ENCODE measurements at regions of chr7 and their contacts with region 1.

Region 1: DNA sequence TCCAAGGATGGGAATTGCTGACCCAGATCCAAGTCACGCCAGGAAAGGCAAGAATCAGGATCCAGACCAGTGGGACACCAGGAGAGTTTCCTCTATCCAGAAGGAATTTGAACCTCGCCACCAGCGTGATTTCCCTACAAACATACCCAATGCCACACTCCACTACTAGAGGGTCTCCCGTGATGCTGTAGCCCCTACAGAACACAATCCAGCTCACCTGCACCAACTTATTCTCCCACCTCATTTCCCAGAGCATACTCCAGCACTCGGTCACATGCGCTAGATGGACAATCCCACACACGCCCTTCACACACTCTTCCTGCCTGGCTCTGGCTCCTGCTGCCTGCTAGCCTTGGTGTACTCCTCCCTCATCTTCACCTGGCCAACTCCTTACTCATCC is 142.1 kb upstream of the PDE1C start:
- DNase-seq: no peak
- ATAC-seq: no peak
- H3K4me3 ChIP-seq: no peak overlapping the region
- H3K27ac ChIP-seq: no peak overlapping the region
- H3K4me1 ChIP-seq: no peaks in the 10 kb centered on the region
- H3K27me3 ChIP-seq: no peaks in the 10 kb centered on the region; a peak in 1 of 4 replicates
- CTCF ChIP-seq: no peak
- EP300 ChIP-seq: no peak
- POLR2A ChIP-seq: no peak
- RAD21 ChIP-seq: no peak

Region 2: DNA sequence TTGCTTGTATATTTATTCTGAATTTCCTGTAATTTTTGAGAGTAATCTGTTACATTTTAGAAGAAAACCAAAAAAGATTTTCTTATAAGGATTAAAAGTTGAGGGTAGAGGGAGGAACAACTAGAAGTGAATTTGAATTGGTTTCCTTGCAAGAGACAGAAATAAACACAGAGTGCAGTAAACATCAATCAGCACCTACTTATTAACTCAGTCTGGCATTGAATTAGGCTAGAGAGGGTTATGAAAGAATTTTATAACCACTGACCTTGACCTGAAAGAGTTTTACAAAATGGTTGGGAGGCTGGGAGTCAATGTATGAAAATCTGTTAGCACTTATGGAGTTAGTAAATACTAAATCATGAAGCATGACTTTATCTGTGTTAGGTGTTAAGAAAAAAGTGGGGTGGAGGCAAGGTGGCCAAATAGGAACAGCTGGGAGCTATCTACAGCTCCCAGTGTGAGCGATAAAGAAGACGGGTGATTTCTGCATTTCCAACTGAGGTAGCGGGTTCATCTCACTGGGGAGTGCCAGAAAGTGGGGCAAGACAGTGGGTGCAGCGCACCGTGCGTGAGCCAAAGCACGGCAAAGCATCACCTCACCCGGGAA is 248.6 kb before region 1 on chr7:
- CTCF ChIA-PET with region 1: no interaction called
- POLR2A ChIA-PET with region 1: no interaction called
- RAD21 ChIA-PET with region 1: no interaction called
- SMC1A ChIA-PET with region 1: no interaction called
- in situ Hi-C with region 1: no loop called
- intact Hi-C with region 1: no loop called
- DNase-seq: no peak
- ATAC-seq: no peak
- H3K4me3 ChIP-seq: no peak overlapping the region
- H3K27ac ChIP-seq: no peak overlapping the region
- H3K4me1 ChIP-seq: no peaks in the 10 kb centered on the region
- H3K27me3 ChIP-seq: no peaks in the 10 kb centered on the region
- CTCF ChIP-seq: no peak
- EP300 ChIP-seq: no peak
- POLR2A ChIP-seq: no peak
- RAD21 ChIP-seq: no peak

Region 3: DNA sequence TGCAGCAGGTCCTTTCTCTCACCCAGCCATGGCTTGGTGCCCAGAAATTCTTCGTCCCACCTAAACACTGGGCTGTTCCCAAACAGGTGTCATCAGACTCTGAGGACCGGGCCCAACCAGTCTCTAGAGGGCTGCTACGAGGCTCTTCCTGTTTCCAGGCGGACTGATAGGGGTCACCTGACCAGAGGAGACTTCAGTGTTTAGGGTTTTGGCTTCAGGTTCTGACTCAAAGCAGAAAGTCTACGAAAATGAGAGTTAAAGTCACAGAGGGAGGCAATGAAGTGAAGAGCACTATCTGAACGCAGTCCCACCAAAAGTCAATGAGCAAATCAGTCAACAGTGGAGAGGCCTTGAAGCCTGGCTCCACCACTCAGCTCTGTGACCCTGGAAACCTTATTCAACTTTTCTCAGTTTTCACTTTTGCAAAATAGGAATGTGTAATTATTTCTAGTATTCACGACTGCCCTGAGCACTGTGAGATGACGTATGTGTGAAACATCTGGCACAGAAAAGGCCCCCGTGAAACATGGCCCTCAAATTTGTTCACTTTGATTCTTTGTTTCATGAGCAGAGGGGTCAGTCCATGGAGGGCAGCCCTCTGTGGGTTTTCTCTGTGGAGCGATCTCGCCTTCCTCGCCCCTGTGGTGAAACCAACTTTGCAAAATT is 47.7 kb after region 1 on chr7:
- CTCF ChIA-PET with region 1: interaction called, 26 read pairs
- POLR2A ChIA-PET with region 1: no interaction called
- RAD21 ChIA-PET with region 1: interaction called, 5 read pairs
- SMC1A ChIA-PET with region 1: interaction called, 4 read pairs
- in situ Hi-C with region 1: no loop called
- intact Hi-C with region 1: no loop called
- DNase-seq: peak; percentile 64
- ATAC-seq: peak; percentile 95
- H3K4me3 ChIP-seq: no peak overlapping the region
- H3K27ac ChIP-seq: peak overlapping the region; percentile 15
- H3K4me1 ChIP-seq: peaks cover 8% of the 10 kb centered on the region
- H3K27me3 ChIP-seq: no peaks in the 10 kb centered on the region
- CTCF ChIP-seq: no peak
- EP300 ChIP-seq: no peak
- POLR2A ChIP-seq: no peak
- RAD21 ChIP-seq: no peak

Region 4: GRCh38 chr7:32378988-32379387 is 166.7 kb after region 1 on chr7:
- CTCF ChIA-PET with region 1: no interaction called
- POLR2A ChIA-PET with region 1: no interaction called
- RAD21 ChIA-PET with region 1: no interaction called
- SMC1A ChIA-PET with region 1: no interaction called
- in situ Hi-C with region 1: no loop called
- intact Hi-C with region 1: no loop called
- DNase-seq: no peak
- ATAC-seq: no peak
- H3K4me3 ChIP-seq: no peak overlapping the region
- H3K27ac ChIP-seq: no peak overlapping the region
- H3K4me1 ChIP-seq: no peaks in the 10 kb centered on the region
- H3K27me3 ChIP-seq: peaks cover 0 to 3% of the 10 kb centered on the region in 2 experiments; a peak in 1 of 4 replicates
- CTCF ChIP-seq: no peak
- EP300 ChIP-seq: no peak
- POLR2A ChIP-seq: no peak
- RAD21 ChIP-seq: no peak

Region 5: DNA sequence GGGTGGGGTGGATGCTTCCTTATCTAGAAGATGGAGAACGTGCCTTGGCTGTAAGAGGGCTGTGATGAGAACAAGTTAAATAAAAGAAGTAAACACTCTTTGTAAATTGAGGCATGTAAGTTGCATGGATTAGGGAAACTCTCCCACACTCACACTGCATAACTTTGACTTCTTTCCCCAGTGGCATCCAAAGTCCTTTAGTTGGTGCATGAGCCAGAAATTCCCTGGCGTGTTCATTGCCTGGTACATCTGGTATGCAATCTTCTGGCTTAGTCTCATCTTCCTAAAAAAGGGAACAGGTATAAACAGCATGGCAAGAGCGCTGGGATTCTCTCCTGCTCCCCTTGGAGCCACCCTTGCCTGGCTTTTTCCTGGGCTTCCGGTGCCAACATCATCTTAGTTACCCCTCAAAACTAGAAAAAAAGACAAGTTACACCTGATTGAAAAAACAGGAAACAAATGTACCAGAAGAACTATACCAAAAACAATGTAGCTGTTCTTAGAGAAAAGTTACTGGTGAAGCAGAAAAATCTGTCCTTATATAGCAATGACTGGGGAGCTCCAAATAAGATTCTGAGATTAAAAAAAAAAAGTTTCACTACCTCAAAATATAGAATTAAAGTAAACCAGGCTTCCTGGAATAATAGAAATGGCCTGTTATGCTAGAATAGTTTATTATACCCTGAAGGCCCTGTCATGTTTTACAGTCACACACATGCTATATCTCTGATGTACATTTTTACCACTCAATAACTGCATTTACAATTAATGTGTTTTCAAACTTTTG is 887.0 kb after region 1 on chr7:
- CTCF ChIA-PET with region 1: no interaction called
- POLR2A ChIA-PET with region 1: no interaction called
- RAD21 ChIA-PET with region 1: no interaction called
- SMC1A ChIA-PET with region 1: no interaction called
- in situ Hi-C with region 1: no loop called
- intact Hi-C with region 1: no loop called
- DNase-seq: no peak
- ATAC-seq: no peak
- H3K4me3 ChIP-seq: no peak overlapping the region
- H3K27ac ChIP-seq: peak overlapping the region; percentile 53
- H3K4me1 ChIP-seq: peaks cover 10% of the 10 kb centered on the region
- H3K27me3 ChIP-seq: no peaks in the 10 kb centered on the region
- CTCF ChIP-seq: no peak
- EP300 ChIP-seq: no peak
- POLR2A ChIP-seq: no peak
- RAD21 ChIP-seq: no peak

Measured in GM12878 (cell line).